Head of caudate nucleus (tissue), 42 donors: ENCODE measurements at regions of chr22 and their contacts with region 1.

Region 1: GRCh38 chr22:23767673-23768548 is at the start of gene CHCHD10:
- DNase-seq: peak; percentile 76 to 96 (median 90)

Region 2: DNA sequence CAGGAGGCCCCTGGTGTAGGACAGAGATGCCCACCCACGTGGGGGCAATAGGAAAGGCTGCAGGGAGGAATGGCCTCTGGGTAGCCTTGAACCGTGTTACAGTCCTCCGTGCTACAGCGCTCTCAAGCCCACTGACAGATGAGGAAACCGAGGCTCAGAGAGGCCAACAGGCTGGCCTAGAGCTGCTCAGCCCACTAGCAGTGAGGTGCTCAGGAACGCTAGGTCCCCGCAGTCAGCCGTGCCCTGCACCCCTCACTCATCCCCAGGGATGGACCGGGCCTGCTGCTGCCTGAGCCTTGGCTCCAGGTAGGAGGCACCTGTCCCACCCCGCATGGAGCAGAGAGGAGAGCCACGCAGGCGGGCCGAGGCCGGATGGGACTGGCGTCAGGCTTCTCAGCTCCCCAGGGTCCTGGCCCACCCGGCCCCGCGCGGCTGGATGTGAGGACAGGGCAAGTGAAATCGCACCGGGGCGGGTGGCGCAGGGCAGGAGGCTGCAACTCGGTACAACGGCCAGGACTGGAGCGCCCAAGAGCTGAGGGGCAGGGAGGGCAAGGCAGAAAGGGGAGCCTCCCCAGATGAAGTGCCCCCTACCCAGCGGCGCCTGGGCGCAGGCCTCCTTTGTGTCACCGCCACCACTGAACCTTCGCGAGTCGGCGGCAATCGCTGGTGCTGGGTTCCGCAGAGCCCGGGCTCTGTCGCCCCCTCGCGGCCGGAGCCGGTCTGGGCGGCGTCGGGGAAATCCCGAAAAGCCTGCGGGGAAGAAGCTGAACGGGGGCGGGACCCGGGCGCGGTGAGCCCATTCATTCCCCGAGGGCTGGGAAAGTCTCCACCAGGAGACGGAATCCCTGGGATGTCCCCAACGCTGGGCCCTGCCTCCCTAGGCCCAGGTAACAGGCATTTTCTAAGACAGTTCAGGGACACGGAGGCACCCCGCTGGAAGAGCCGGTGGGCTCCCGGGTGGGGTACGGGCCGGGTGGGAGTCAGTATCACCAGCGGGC is 81.4 kb after region 1 on chr22:
- intact Hi-C with region 1: loop called (anchors 5 kb)
- DNase-seq: peak; percentile 69 to 95 (median 89)

Region 3: GRCh38 chr22:23878219-23878618 is 110.3 kb after region 1 on chr22:
- intact Hi-C with region 1: no loop called
- DNase-seq: peak in 10 of 42 donors; percentile 24 to 60 (median 42)